Activated B cell treated with CpG ODN at 0.5 μM for 24 hours (primary cell): ENCODE measurements at regions of chr21 and their contacts with region 1.

Region 1: GRCh38 chr21:17819114-17819876 is at the start of gene C21orf91:
- DNase-seq: peak; percentile 83
- ATAC-seq: peak; percentile 85
- H3K4me3 Mint-ChIP-seq: peak within 1 kb of the TSS; percentile 94
- H3K27ac Mint-ChIP-seq: peak within 1 kb of the TSS; percentile 100
- H3K4me1 Mint-ChIP-seq: peaks cover 40% of the 10 kb centered on the region
- H3K27me3 Mint-ChIP-seq: no peaks in the 10 kb centered on the region
- CTCF ChIP-seq: no peak
- total RNA-seq, gene C21orf91: 34.2 and 35.9 TPM in 2 replicates

Region 2: GRCh38 chr21:17679002-17679600 is 140.2 kb before region 1 on chr21:
- CTCF ChIA-PET with region 1: interaction called, 4 read pairs
- POLR2A ChIA-PET with region 1: no interaction called
- intact Hi-C with region 1: loop called (anchors 1 kb)
- DNase-seq: no peak
- ATAC-seq: peak; percentile 81
- H3K4me3 Mint-ChIP-seq: no peak overlapping the region
- H3K27ac Mint-ChIP-seq: no peak overlapping the region
- H3K4me1 Mint-ChIP-seq: no peaks in the 10 kb centered on the region
- H3K27me3 Mint-ChIP-seq: no peaks in the 10 kb centered on the region
- CTCF ChIP-seq: peak; percentile 44

Region 3: GRCh38 chr21:17780539-17780938 is 38.8 kb before region 1 on chr21:
- CTCF ChIA-PET with region 1: interaction called, 5 read pairs
- POLR2A ChIA-PET with region 1: interaction called, 49 read pairs
- intact Hi-C with region 1: loop called (anchors 1 kb)
- DNase-seq: no peak
- ATAC-seq: peak; percentile 45
- H3K4me3 Mint-ChIP-seq: peak overlapping the region; percentile 55
- H3K27ac Mint-ChIP-seq: peak overlapping the region; percentile 75
- H3K4me1 Mint-ChIP-seq: peaks cover 81% of the 10 kb centered on the region
- H3K27me3 Mint-ChIP-seq: no peaks in the 10 kb centered on the region
- CTCF ChIP-seq: no peak

Region 4: GRCh38 chr21:17798796-17799195 is 20.5 kb before region 1 on chr21:
- CTCF ChIA-PET with region 1: interaction called, 3 read pairs
- POLR2A ChIA-PET with region 1: interaction called, 22 read pairs
- intact Hi-C with region 1: loop called (anchors 1 kb)
- DNase-seq: no peak
- ATAC-seq: no peak
- H3K4me3 Mint-ChIP-seq: no peak overlapping the region
- H3K27ac Mint-ChIP-seq: no peak overlapping the region
- H3K4me1 Mint-ChIP-seq: peaks cover 48% of the 10 kb centered on the region
- H3K27me3 Mint-ChIP-seq: no peaks in the 10 kb centered on the region
- CTCF ChIP-seq: no peak

Region 5: GRCh38 chr21:17829472-17829871 is 10.2 kb after region 1 on chr21:
- CTCF ChIA-PET with region 1: no interaction called
- POLR2A ChIA-PET with region 1: interaction called, 27 read pairs
- intact Hi-C with region 1: loop called (anchors 1 kb)
- DNase-seq: no peak
- ATAC-seq: no peak
- H3K4me3 Mint-ChIP-seq: no peak overlapping the region
- H3K27ac Mint-ChIP-seq: no peak overlapping the region
- H3K4me1 Mint-ChIP-seq: peaks cover 4% of the 10 kb centered on the region
- H3K27me3 Mint-ChIP-seq: no peaks in the 10 kb centered on the region
- CTCF ChIP-seq: no peak

Region 6: DNA sequence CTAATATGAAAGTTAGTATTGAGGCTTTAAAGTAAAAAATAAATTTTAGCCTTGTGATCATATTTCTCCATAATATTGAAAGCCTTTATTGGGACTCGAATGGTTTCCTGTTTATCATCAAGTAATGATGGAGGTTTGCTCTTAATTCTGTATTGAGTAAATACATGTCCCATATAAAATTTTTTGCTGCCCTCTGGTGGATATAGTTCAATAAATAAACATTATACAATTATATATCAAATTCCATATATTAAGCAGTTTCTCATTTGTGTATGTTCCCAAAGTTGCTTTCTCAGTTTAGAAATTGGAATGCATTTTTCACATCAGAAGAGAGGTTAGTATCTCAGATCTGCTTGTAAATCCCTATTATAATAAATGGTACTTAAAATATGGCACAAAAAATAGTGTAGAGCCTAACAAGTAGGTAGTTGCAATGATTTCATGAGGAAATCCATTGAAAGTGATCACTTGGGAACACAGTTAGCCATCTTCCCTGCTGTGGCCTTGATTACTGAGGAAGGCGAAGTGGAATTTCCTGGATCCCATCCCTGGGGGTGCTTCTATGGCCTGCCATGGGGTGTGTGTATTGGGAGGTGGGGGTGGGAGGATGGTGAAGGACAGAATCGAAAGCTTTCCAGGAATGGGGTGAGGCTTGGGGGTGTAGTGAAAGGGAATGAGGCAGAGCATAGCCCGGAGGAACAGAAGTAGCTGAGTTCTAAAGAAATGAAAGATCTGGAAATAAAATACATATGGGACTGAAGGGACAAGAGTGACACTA is 83.9 kb after region 1 on chr21:
- CTCF ChIA-PET with region 1: no interaction called
- POLR2A ChIA-PET with region 1: no interaction called
- intact Hi-C with region 1: loop called (anchors 1 kb)
- DNase-seq: no peak
- ATAC-seq: peak; percentile 37
- H3K4me3 Mint-ChIP-seq: no peak overlapping the region
- H3K27ac Mint-ChIP-seq: no peak overlapping the region
- H3K4me1 Mint-ChIP-seq: peaks cover 6% of the 10 kb centered on the region
- H3K27me3 Mint-ChIP-seq: no peaks in the 10 kb centered on the region
- CTCF ChIP-seq: no peak